ENCODE measurements at regions of chr7 and their contacts with region 1.

Region 1: DNA sequence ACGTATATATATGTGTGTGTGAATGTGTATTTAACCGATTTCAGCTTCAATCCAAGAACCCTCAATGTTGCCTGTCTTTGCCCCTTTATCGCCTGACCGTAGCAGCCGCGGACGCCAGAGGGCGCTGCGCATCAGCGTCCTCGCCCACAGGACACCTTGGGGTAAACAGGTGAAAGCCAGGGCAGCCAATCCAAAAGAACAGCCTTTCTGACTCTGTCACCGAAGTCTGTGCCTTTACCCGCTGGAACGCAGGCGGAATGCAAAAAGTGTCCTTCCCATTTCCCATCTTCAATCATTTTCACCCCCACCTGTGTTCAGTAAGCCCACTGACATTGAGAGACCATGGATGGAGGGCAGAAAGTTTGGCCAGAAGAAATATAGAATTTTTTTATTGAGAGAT is 3.6 kb downstream of the NXPH1 start:
- DNase-seq: peak in 1 of 2 experiments; percentile 93
- H3K4me3 ChIP-seq: peak overlapping the region in 2 of 4 experiments; percentile 26 to 70; a peak in 4 of 8 replicates
- H3K27ac ChIP-seq: no peak overlapping the region
- H3K4me1 ChIP-seq: peaks cover 2 to 29% (median 12%) of the 10 kb centered on the region in 4 experiments; a peak in 6 of 7 replicates
- H3K27me3 ChIP-seq: peaks cover 67 to 95% (median 90%) of the 10 kb centered on the region in 4 experiments
- CTCF ChIP-seq: peak; percentile 91 to 98 (median 96)
- EP300 ChIP-seq: no peak
- POLR2A ChIP-seq: no peak
- RAD21 ChIP-seq: peak; percentile 92 to 95

Region 2: GRCh38 chr7:8176370-8177081 is 260.4 kb before region 1 on chr7:
- CTCF ChIA-PET with region 1: no interaction called
- POLR2A ChIA-PET with region 1: no interaction called
- DNase-seq: no peak
- H3K4me3 ChIP-seq: no peak overlapping the region
- H3K27ac ChIP-seq: no peak overlapping the region
- H3K4me1 ChIP-seq: peaks cover 0 to 12% (median 2%) of the 10 kb centered on the region in 4 experiments; a peak in 4 of 7 replicates
- H3K27me3 ChIP-seq: no peaks in the 10 kb centered on the region
- CTCF ChIP-seq: no peak
- EP300 ChIP-seq: no peak
- POLR2A ChIP-seq: no peak
- RAD21 ChIP-seq: no peak

Region 3: GRCh38 chr7:8418629-8419245 is 18.2 kb before region 1 on chr7:
- CTCF ChIA-PET with region 1: interaction called, 25 read pairs
- POLR2A ChIA-PET with region 1: interaction called, 3 read pairs
- DNase-seq: peak in 1 of 2 experiments; percentile 67
- H3K4me3 ChIP-seq: no peak overlapping the region
- H3K27ac ChIP-seq: no peak overlapping the region
- H3K4me1 ChIP-seq: no peaks in the 10 kb centered on the region
- H3K27me3 ChIP-seq: no peaks in the 10 kb centered on the region
- CTCF ChIP-seq: peak in 2 of 3 experiments; percentile 53 to 62; a peak in 3 of 4 replicates
- EP300 ChIP-seq: no peak
- POLR2A ChIP-seq: no peak
- RAD21 ChIP-seq: peak; percentile 78 to 86

Region 4: GRCh38 chr7:8567626-8568025 is 130.7 kb after region 1 on chr7:
- CTCF ChIA-PET with region 1: no interaction called
- POLR2A ChIA-PET with region 1: no interaction called
- DNase-seq: no peak
- H3K4me3 ChIP-seq: no peak overlapping the region
- H3K27ac ChIP-seq: no peak overlapping the region
- H3K4me1 ChIP-seq: peaks cover 0 to 2% (median 0%) of the 10 kb centered on the region in 4 experiments; a peak in 1 of 7 replicates
- H3K27me3 ChIP-seq: no peaks in the 10 kb centered on the region
- CTCF ChIP-seq: no peak
- EP300 ChIP-seq: no peak
- POLR2A ChIP-seq: no peak
- RAD21 ChIP-seq: no peak

Region 5: DNA sequence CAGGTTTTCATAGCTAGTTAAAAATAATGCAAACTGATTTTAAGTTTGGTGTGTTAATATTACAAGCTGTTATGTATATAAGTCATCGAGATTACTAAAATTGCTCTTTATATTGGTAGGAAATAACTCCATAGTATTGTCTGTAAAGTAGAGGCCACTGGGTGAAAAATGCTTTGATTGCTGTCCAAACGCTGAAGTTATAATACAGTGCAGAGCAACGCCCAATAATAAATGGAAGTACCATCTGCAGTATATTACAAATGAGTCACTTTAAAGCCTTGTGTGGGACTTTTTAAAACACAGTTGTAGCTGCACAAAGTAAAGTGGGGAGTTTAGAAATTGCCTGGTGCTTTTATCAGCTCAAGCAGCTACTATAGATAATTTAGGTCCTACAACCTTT is 192.5 kb after region 1 on chr7:
- CTCF ChIA-PET with region 1: no interaction called
- POLR2A ChIA-PET with region 1: no interaction called
- DNase-seq: no peak
- H3K4me3 ChIP-seq: no peak overlapping the region
- H3K27ac ChIP-seq: no peak overlapping the region
- H3K4me1 ChIP-seq: peaks cover 0 to 3% (median 2%) of the 10 kb centered on the region in 4 experiments; a peak in 1 of 7 replicates
- H3K27me3 ChIP-seq: no peaks in the 10 kb centered on the region
- CTCF ChIP-seq: no peak
- EP300 ChIP-seq: no peak
- POLR2A ChIP-seq: no peak
- RAD21 ChIP-seq: no peak